Head of caudate nucleus (tissue), 42 donors: ENCODE measurements at regions of chr12 and their contacts with region 1.

Region 1: DNA sequence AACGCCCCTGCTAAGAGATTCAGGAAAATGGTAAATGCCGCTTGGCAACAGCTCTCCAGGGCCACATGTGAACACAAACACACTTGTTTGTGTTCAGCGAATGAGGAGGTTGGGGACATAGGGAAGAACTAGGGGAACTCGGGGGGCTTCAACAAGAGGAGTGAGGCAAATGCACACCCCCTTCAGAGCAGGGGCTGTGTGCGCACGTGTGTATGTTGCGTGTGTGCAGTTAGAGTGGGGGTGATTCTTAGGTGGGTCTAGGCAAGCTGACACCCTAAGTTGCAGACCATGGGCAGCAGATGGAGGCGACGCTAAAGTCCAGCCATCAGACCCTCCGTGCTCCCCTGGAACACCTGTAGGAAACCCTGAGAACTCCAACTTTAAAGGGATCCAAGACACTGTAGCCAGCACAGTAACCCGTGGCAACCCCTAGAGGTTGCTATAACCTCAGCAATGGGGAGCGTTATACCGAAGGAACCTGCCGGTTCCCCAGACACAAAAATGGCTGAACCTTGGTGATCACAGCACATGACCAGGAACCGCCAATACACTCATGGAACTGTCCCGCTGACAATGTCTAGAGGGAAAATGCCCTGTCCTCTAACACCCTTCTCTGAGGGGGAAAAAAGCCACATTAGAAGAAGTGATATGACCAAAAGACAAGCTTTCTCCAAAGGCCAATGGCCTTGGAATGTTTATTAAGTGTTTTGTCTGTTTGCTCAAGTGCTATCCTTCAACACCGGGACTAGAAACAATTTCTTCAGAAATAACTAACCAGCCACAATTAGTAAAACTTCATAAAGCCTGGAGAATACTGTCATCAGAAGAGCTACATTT is 86.5 kb upstream of the CEP83 start:
- DNase-seq: peak in 41 of 42 donors; percentile 25 to 83 (median 59)

Region 2: GRCh38 chr12:94532490-94533422 is 13.4 kb before region 1 on chr12:
- intact Hi-C with region 1: no loop called
- DNase-seq: peak; percentile 52 to 90 (median 76)

Region 3: GRCh38 chr12:94762259-94762942 is 216.2 kb after region 1 on chr12:
- intact Hi-C with region 1: loop called (anchors 10 kb)
- DNase-seq: peak in 1 of 42 donors; percentile 3

Region 4: DNA sequence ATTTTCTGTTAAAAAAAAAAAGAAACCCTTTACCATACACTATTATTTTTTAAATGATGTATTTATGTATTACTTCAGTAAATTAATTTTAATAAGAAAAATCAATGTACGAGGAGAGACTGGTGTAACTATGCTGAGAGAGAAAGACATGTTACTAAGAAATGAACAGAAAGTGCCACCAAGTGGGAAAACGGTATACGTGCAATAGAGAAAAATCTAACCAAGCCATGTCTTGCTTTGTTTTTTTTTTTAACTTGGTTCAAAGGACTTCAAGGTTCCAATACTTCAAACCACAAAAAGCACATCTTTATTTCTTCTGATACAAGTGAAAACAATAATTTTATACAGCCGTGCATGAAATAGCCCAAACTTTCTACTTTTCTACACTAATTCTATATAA is 434.4 kb after region 1 on chr12:
- intact Hi-C with region 1: loop called (anchors 10 kb)
- DNase-seq: peak in 2 of 42 donors; percentile 7 to 21

Region 5: GRCh38 chr12:95336390-95337067 is 790.4 kb after region 1 on chr12:
- intact Hi-C with region 1: loop called (anchors 10 kb)
- DNase-seq: peak; percentile 9 to 86 (median 61)